Colonic mucosa (tissue), 4 donors: ENCODE measurements at regions of chr7 and their contacts with region 1.

Region 1: DNA sequence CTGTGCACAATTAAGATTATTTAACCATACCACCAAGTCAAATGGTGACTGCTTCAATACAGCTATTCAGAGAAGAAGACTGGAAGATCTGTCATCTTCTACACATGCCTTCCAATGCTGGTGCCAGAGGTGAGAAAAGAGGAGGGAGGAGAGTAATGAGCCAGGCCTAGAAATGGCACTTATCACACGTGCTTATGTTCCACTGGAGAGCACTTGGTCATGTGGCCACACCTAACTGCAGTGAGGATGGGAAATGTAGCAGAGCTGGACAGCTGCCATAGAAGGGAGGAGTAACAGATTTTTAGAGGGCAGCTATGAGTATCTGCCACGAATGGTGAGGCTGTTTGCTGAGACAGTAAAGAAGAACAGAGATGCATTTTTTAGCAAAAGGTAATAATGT is 77.1 kb downstream of the MPLKIP start:
- DNase-seq: peak; percentile 70
- H3K4me3 ChIP-seq: no peak overlapping the region
- H3K27ac ChIP-seq: no peak overlapping the region
- H3K4me1 ChIP-seq: no peaks in the 10 kb centered on the region
- H3K27me3 ChIP-seq: no peaks in the 10 kb centered on the region
- CTCF ChIP-seq: no peak

Region 2: DNA sequence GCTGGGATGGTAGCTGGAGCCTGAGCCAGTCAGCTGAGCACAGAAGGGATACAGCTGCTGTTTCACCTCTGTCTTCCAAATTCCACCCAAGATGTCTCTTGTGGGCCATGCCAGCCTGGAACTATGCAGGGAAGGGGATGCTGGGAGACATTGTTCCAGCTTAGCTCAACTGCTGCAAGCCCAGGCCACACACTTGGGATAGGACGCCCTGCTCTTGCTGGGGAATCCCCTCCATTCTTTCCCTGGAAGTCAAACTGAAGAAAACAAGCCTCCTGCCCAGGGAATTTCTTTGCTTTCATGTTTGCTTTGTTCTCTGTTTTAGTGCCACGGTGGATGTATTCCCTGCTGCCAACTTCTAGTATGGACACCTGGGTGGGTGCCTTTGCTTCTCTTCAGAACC is 162.4 kb before region 1 on chr7:
- intact Hi-C with region 1: loop called (anchors 5 kb)
- DNase-seq: no peak
- H3K4me3 ChIP-seq: no peak overlapping the region
- H3K27ac ChIP-seq: no peak overlapping the region
- H3K4me1 ChIP-seq: no peaks in the 10 kb centered on the region
- H3K27me3 ChIP-seq: no peaks in the 10 kb centered on the region
- CTCF ChIP-seq: no peak

Region 3: GRCh38 chr7:39958038-39958437 is 99.3 kb before region 1 on chr7:
- intact Hi-C with region 1: loop called (anchors 5 kb)
- DNase-seq: no peak
- H3K4me3 ChIP-seq: no peak overlapping the region
- H3K27ac ChIP-seq: no peak overlapping the region
- H3K4me1 ChIP-seq: peaks cover 17% of the 10 kb centered on the region
- H3K27me3 ChIP-seq: no peaks in the 10 kb centered on the region
- CTCF ChIP-seq: no peak